Activated CD4-positive, alpha-beta T cell treated with anti-CD3 and anti-CD28 coated beads, Interleukin-2, amount 10 ng/mL, durations not matched to agents 24 days and 14 days (primary cell): ENCODE measurements at regions of chr3 and their contacts with region 1.

Region 1: GRCh38 chr3:177197041-177197727 is at the start of gene TBL1XR1:
- DNase-seq: peak; percentile 96
- H3K4me3 Mint-ChIP-seq: peak within 1 kb of the TSS; percentile 88
- H3K27ac Mint-ChIP-seq: peak within 1 kb of the TSS; percentile 98
- H3K4me1 Mint-ChIP-seq: peaks cover 52% of the 10 kb centered on the region
- H3K27me3 Mint-ChIP-seq: no peaks in the 10 kb centered on the region
- total RNA-seq, gene TBL1XR1: 160 and 178 TPM in 2 replicates

Region 2: GRCh38 chr3:177144923-177145780 is 52.0 kb before region 1 on chr3:
- intact Hi-C with region 1: loop called (anchors 2 kb)
- DNase-seq: peak; percentile 81
- H3K4me3 Mint-ChIP-seq: peak overlapping the region; percentile 72
- H3K27ac Mint-ChIP-seq: peak overlapping the region; percentile 82
- H3K4me1 Mint-ChIP-seq: peaks cover 54% of the 10 kb centered on the region
- H3K27me3 Mint-ChIP-seq: no peaks in the 10 kb centered on the region

Region 3: DNA sequence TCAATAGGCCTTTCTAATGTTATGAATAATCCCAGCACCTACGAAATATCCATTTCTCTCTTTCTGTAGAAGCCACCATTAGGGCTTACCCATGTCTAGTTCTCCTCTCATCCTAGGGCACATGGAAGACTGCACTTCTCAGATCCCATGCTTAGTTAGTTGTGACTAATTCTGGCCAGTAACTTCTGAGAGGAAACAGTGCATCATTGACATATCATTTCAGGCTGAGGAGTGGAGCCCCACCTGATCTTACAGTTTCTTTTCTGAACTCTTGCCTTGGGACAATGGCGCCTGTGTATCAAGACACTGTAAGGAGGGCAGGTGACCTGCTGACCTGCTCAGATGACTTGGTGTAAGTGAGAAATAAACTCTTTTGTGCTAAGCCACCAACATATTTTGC is 39.5 kb after region 1 on chr3:
- intact Hi-C with region 1: loop called (anchors 1 kb)
- DNase-seq: no peak
- H3K4me3 Mint-ChIP-seq: no peak overlapping the region
- H3K27ac Mint-ChIP-seq: no peak overlapping the region
- H3K4me1 Mint-ChIP-seq: peaks cover 3% of the 10 kb centered on the region
- H3K27me3 Mint-ChIP-seq: no peaks in the 10 kb centered on the region

Region 4: GRCh38 chr3:177419904-177420601 is 222.9 kb after region 1 on chr3:
- intact Hi-C with region 1: loop called (anchors 1 kb)
- DNase-seq: peak; percentile 60
- H3K4me3 Mint-ChIP-seq: no peak overlapping the region
- H3K27ac Mint-ChIP-seq: peak overlapping the region; percentile 79
- H3K4me1 Mint-ChIP-seq: peaks cover 20% of the 10 kb centered on the region
- H3K27me3 Mint-ChIP-seq: no peaks in the 10 kb centered on the region

Region 5: DNA sequence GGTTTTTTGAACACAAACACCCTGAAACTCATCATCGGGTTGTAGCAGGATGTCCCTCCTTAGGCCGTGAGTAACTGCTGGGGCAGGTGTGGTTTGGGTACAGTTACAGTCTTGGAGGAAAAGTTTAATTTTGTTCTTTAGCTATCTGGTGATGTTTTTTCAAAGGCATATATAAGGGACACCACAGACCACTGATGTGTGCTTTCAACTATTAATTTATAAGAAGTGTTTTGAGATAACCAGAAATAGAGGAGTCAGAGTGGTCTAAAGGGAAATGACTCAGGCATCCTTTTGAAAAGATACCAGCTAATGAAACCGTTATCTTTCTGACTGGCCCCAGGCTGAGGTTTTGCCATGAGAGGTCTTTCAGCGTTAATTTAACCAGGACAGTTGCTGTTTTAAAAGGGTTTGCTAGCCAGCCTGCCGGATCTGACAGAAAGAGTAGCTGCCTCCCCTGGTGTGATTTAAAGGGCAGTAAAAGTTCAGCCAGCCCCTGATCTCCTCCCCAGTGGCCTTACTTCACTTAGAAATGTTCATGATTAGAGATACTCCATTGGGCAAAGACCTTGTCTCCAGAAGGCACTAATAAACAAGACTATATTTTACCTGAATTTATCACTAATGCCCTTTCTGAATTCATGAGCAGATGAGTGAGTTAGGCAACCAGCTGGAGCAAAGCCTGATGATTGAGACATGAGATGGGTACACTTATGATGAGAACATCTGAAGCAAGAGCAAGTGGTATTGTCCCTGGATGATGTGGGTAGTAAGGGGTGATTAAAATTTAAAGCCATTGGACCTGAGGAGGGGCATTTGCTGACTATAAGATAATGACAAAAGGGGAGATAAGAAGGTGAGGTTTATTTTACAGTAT is 482.6 kb after region 1 on chr3:
- intact Hi-C with region 1: loop called (anchors 10 kb)
- DNase-seq: no peak
- H3K4me3 Mint-ChIP-seq: no peak overlapping the region
- H3K27ac Mint-ChIP-seq: peak overlapping the region; percentile 26
- H3K4me1 Mint-ChIP-seq: peaks cover 25% of the 10 kb centered on the region
- H3K27me3 Mint-ChIP-seq: no peaks in the 10 kb centered on the region